ENCODE measurements at regions of chr4 and their contacts with region 1.

Region 1: DNA sequence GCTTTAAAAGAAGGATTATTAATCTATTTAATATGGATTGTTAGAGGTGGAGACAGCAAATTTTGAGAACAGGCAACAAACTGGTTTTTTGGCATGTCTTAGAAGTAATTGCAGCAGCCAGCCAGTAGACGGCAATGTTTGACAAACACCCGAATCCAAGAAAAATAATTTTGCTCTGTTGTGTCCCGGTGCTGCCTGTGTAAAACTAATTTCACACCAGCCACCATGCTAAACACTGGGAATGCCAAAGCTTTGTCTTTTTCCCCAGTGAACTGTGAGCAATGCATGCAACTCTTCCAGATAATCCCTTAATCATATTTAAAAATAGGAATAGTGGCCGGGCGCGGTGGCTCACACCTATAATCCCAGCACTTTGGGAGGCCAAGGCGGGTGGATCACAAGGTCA is 25.9 kb downstream of the SMIM31 start:
- DNase-seq: no peak
- ATAC-seq: no peak
- H3K4me3 ChIP-seq: no peak overlapping the region
- H3K27ac ChIP-seq: no peak overlapping the region
- H3K4me1 ChIP-seq: no peaks in the 10 kb centered on the region
- H3K27me3 ChIP-seq: no peaks in the 10 kb centered on the region
- CTCF ChIP-seq: peak; percentile 35 to 68 (median 52)
- POLR2A ChIP-seq: no peak

Region 2: GRCh38 chr4:164536814-164537213 is 243.0 kb before region 1 on chr4:
- intact Hi-C with region 1: no loop called
- DNase-seq: no peak
- ATAC-seq: no peak
- H3K4me3 ChIP-seq: no peak overlapping the region
- H3K27ac ChIP-seq: no peak overlapping the region
- H3K4me1 ChIP-seq: no peaks in the 10 kb centered on the region
- H3K27me3 ChIP-seq: no peaks in the 10 kb centered on the region
- CTCF ChIP-seq: no peak
- POLR2A ChIP-seq: no peak

Region 3: DNA sequence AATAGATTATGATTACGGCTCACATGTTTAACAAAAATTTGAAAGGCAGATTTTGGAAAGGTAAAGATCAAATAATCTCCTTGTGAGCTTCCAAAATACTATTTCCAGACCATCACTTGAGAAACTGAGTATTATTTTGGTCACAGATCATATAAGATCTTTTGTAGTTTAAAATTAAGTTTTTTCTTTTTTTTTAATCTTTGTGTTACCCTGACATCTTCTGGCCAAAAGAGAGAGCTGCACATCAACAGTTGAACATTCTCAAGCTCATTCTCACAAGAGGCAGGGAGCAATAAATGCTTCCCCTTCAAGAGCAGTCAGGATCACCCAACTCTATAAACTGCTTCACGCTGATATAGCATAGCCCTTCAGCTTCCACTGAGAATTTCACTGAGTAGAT is 317.0 kb after region 1 on chr4:
- intact Hi-C with region 1: loop called in 5 of 10 experiments (anchors 5 to 10 kb)
- DNase-seq: no peak
- ATAC-seq: no peak
- H3K4me3 ChIP-seq: no peak overlapping the region
- H3K27ac ChIP-seq: no peak overlapping the region
- H3K4me1 ChIP-seq: no peaks in the 10 kb centered on the region
- H3K27me3 ChIP-seq: no peaks in the 10 kb centered on the region
- CTCF ChIP-seq: peak in 11 of 12 donors; percentile 22 to 54 (median 46)
- POLR2A ChIP-seq: no peak